CD8-positive, alpha-beta T cell (primary cell): ENCODE measurements at regions of chr5 and their contacts with region 1.

Region 1: GRCh38 chr5:103041071-103041676 is 78.8 kb downstream of the GIN1 start:
- DNase-seq: peak in 2 of 9 experiments; percentile 44 to 58
- ATAC-seq: no peak
- H3K4me3 ChIP-seq: no peak overlapping the region
- H3K4me3 Mint-ChIP-seq: no peak overlapping the region
- H3K27ac ChIP-seq: no peak overlapping the region
- H3K27ac Mint-ChIP-seq: no peak overlapping the region
- H3K4me1 ChIP-seq: no peaks in the 10 kb centered on the region
- H3K4me1 Mint-ChIP-seq: no peaks in the 10 kb centered on the region
- H3K27me3 ChIP-seq: no peaks in the 10 kb centered on the region
- H3K27me3 Mint-ChIP-seq: peaks cover 2% of the 10 kb centered on the region
- CTCF ChIP-seq: peak; percentile 49

Region 2: DNA sequence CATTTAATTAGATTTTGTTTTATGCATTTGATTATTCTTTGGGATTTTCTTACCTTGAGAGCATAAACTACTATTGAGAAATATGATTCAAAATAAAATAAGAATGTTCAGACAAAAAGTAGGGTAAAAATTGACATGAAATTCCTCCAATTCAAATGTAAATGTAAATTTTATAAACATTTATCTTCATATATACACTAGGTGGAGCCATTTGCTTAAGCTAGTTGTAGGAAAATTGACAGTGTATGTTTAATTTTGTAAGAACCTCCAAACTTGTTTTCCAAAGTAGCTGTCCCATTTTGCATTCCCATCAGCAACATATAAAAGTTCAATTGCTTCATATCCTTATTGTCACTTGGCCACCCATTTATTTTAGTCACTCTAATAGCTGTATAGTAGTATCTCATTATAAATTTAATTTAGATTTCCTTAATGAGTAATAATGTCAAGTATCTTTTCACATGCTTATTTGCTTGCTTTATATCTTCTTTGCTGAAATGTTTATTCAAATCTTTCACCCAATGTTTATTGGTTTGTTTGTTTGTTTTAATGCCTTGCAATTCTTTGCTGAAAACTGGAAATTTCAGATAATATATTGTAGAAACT is 504.7 kb before region 1 on chr5:
- CTCF ChIA-PET with region 1: interaction called, 3 read pairs
- POLR2A ChIA-PET with region 1: no interaction called
- intact Hi-C with region 1: loop called (anchors 2 kb)
- DNase-seq: peak in 2 of 9 experiments; percentile 1 to 14
- ATAC-seq: no peak
- H3K4me3 ChIP-seq: no peak overlapping the region
- H3K4me3 Mint-ChIP-seq: no peak overlapping the region
- H3K27ac ChIP-seq: no peak overlapping the region
- H3K27ac Mint-ChIP-seq: no peak overlapping the region
- H3K4me1 ChIP-seq: no peaks in the 10 kb centered on the region
- H3K4me1 Mint-ChIP-seq: no peaks in the 10 kb centered on the region
- H3K27me3 ChIP-seq: no peaks in the 10 kb centered on the region
- H3K27me3 Mint-ChIP-seq: peaks cover 2% of the 10 kb centered on the region
- CTCF ChIP-seq: peak; percentile 28

Region 3: GRCh38 chr5:102681407-102681983 is 359.7 kb before region 1 on chr5:
- CTCF ChIA-PET with region 1: interaction called, 6 read pairs
- POLR2A ChIA-PET with region 1: no interaction called
- intact Hi-C with region 1: loop called in 1 of 2 experiments (anchors 2 kb)
- DNase-seq: peak; percentile 8 to 69 (median 47)
- ATAC-seq: no peak
- H3K4me3 ChIP-seq: no peak overlapping the region
- H3K4me3 Mint-ChIP-seq: no peak overlapping the region
- H3K27ac ChIP-seq: no peak overlapping the region
- H3K27ac Mint-ChIP-seq: no peak overlapping the region
- H3K4me1 ChIP-seq: no peaks in the 10 kb centered on the region
- H3K4me1 Mint-ChIP-seq: no peaks in the 10 kb centered on the region
- H3K27me3 ChIP-seq: no peaks in the 10 kb centered on the region
- H3K27me3 Mint-ChIP-seq: peaks cover 2% of the 10 kb centered on the region
- CTCF ChIP-seq: peak; percentile 55